GM12878 (cell line): ENCODE measurements at regions of chr7 and their contacts with region 1.

Region 1: GRCh38 chr7:127651556-127652332 is at the start of gene SND1:
- DNase-seq: peak; percentile 96
- ATAC-seq: peak; percentile 94
- H3K4me3 ChIP-seq: peak within 1 kb of the TSS; percentile 89
- H3K27ac ChIP-seq: peak within 1 kb of the TSS; percentile 95
- H3K4me1 ChIP-seq: peaks cover 14% of the 10 kb centered on the region
- H3K27me3 ChIP-seq: no peaks in the 10 kb centered on the region
- CTCF ChIP-seq: no peak
- EP300 ChIP-seq: 0 out of 4 replicates have a peak, but pooled peaks of 1 of the 2 experiments have one; percentile 29
- POLR2A ChIP-seq: peak; percentile 99
- RAD21 ChIP-seq: no peak
- polyA plus RNA-seq, gene SND1: 52.4 to 70.0 TPM

Region 2: DNA sequence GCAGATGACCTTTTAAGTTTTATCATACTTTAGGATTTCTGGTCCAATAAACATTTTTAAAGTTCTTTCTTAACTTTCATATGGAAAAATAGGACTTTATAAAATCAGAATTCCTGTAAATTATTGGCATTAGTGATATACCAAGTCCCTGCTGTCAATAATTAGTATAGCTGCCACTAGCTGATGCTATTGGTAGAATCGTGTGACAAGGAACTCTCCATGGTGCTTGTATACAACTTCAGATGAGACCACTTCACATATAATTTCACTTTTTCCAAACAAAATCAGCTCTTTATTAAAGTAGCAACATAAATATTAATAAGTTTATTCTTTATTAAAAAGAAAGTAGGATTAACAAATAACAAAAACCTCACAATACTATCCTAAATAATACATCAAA is 309.1 kb before region 1 on chr7:
- CTCF ChIA-PET with region 1: no interaction called
- POLR2A ChIA-PET with region 1: no interaction called
- RAD21 ChIA-PET with region 1: no interaction called
- SMC1A ChIA-PET with region 1: no interaction called
- in situ Hi-C with region 1: no loop called
- intact Hi-C with region 1: no loop called
- DNase-seq: no peak
- ATAC-seq: no peak
- H3K4me3 ChIP-seq: no peak overlapping the region
- H3K27ac ChIP-seq: no peak overlapping the region
- H3K4me1 ChIP-seq: no peaks in the 10 kb centered on the region
- H3K27me3 ChIP-seq: no peaks in the 10 kb centered on the region; a peak in 1 of 4 replicates
- CTCF ChIP-seq: no peak
- EP300 ChIP-seq: no peak
- POLR2A ChIP-seq: no peak
- RAD21 ChIP-seq: no peak

Region 3: GRCh38 chr7:127392566-127393367 is 259.0 kb before region 1 on chr7 and contains the start of gene ZNF800:
- CTCF ChIA-PET with region 1: no interaction called
- POLR2A ChIA-PET with region 1: no interaction called
- RAD21 ChIA-PET with region 1: no interaction called
- SMC1A ChIA-PET with region 1: no interaction called
- in situ Hi-C with region 1: no loop called
- intact Hi-C with region 1: loop called (anchors 5 kb)
- DNase-seq: no peak
- ATAC-seq: peak; percentile 86
- H3K4me3 ChIP-seq: peak within 1 kb of the TSS; percentile 83
- H3K27ac ChIP-seq: peak within 1 kb of the TSS; percentile 97
- H3K4me1 ChIP-seq: peaks cover 7% of the 10 kb centered on the region; the same call in 1 of the 2 replicates
- H3K27me3 ChIP-seq: no peaks in the 10 kb centered on the region
- CTCF ChIP-seq: no peak
- EP300 ChIP-seq: no peak
- POLR2A ChIP-seq: peak; percentile 90
- RAD21 ChIP-seq: no peak
- polyA plus RNA-seq, gene ZNF800: 6.8 to 7.4 TPM

Region 4: GRCh38 chr7:127585044-127585953 is 66.4 kb before region 1 on chr7 and contains the start of gene GCC1:
- CTCF ChIA-PET with region 1: no interaction called
- POLR2A ChIA-PET with region 1: interaction called, 6 read pairs
- RAD21 ChIA-PET with region 1: interaction called, 7 read pairs
- SMC1A ChIA-PET with region 1: no interaction called
- in situ Hi-C with region 1: no loop called
- intact Hi-C with region 1: loop called (anchors 2 kb)
- DNase-seq: peak; percentile 52
- ATAC-seq: peak; percentile 84
- H3K4me3 ChIP-seq: peak within 1 kb of the TSS; percentile 97
- H3K27ac ChIP-seq: peak within 1 kb of the TSS; percentile 74
- H3K4me1 ChIP-seq: peaks cover 15% of the 10 kb centered on the region
- H3K27me3 ChIP-seq: no peaks in the 10 kb centered on the region
- CTCF ChIP-seq: no peak
- EP300 ChIP-seq: no peak
- POLR2A ChIP-seq: peak; percentile 95
- RAD21 ChIP-seq: no peak
- polyA plus RNA-seq, gene GCC1: 1.8 to 2.7 TPM

Region 5: GRCh38 chr7:127673902-127674301 is 22.2 kb after region 1 on chr7:
- CTCF ChIA-PET with region 1: interaction called, 4 read pairs
- POLR2A ChIA-PET with region 1: interaction called, 12 read pairs
- RAD21 ChIA-PET with region 1: interaction called, 5 read pairs
- SMC1A ChIA-PET with region 1: interaction called, 7 read pairs
- in situ Hi-C with region 1: no loop called
- intact Hi-C with region 1: no loop called
- DNase-seq: no peak
- ATAC-seq: no peak
- H3K4me3 ChIP-seq: no peak overlapping the region
- H3K27ac ChIP-seq: no peak overlapping the region
- H3K4me1 ChIP-seq: 0 out of 2 replicates have a peak, but pooled peaks cover 4% of the 10 kb centered on the region
- H3K27me3 ChIP-seq: no peaks in the 10 kb centered on the region
- CTCF ChIP-seq: no peak
- EP300 ChIP-seq: no peak
- POLR2A ChIP-seq: no peak
- RAD21 ChIP-seq: no peak

Region 6: DNA sequence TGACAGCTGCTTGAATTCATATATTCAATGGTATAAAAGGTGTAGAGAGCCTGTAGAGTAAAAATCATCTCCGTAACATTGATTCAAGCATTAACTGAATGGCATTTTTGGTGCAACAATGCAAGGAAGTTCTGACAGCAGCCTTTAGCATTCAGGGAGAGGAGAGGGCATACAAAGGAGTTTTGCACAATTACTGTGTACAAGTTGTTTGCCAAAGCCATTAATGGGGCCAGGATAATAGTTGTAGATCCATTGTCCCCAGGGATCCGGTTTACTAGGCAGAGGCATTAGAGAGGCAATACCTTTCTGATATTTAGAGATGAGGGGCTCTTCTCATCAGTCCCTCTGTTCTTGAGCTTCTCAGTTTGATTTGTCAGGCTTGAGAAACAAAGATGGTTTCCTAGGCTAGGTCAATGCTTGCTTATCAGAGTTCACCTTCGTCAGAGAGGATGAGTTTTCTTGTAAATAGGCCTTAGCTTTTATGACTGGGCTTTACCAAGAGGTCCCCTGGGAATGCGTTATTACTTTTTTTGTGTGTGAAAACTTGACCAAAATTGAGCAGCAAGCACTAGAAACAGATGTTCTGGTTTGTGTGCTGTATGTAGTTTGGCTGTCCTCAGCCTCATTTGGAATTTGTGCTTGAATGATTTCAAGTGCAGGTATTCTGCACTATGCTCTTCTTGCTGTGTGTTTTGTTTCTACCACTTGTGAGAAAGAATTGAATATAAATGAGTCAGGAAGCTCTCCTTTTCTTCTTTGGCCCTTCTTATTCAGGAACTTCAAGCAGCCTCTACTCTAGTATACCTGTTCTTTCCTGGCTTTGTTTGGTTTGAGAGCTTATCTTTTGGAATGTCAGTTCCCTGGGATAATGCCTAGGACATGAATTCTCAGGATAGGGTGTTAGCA is 32.3 kb after region 1 on chr7:
- CTCF ChIA-PET with region 1: interaction called, 5 read pairs
- POLR2A ChIA-PET with region 1: interaction called, 3 read pairs
- RAD21 ChIA-PET with region 1: interaction called, 10 read pairs
- SMC1A ChIA-PET with region 1: interaction called, 7 read pairs
- in situ Hi-C with region 1: no loop called
- intact Hi-C with region 1: loop called (anchors 2 kb)
- DNase-seq: peak; percentile 82
- ATAC-seq: peak; percentile 77
- H3K4me3 ChIP-seq: peak overlapping the region; percentile 4; the same call in 1 of the 2 replicates
- H3K27ac ChIP-seq: peak overlapping the region; percentile 80
- H3K4me1 ChIP-seq: peaks cover 36% of the 10 kb centered on the region
- H3K27me3 ChIP-seq: no peaks in the 10 kb centered on the region
- CTCF ChIP-seq: no peak
- EP300 ChIP-seq: peak in 1 of 2 experiments; percentile 34; a peak in 1 of 4 replicates
- POLR2A ChIP-seq: no peak
- RAD21 ChIP-seq: no peak